ENCODE measurements at regions of chr2 and their contacts with region 1.

Region 1: GRCh38 chr2:141513853-141514252 is 617.0 kb downstream of the LRP1B start:
- DNase-seq: no peak

Region 2: GRCh38 chr2:141029424-141030078 is 484.3 kb before region 1 on chr2:
- intact Hi-C with region 1: loop called in 1 of 2 experiments (anchors 10 kb)
- DNase-seq: no peak

Region 3: DNA sequence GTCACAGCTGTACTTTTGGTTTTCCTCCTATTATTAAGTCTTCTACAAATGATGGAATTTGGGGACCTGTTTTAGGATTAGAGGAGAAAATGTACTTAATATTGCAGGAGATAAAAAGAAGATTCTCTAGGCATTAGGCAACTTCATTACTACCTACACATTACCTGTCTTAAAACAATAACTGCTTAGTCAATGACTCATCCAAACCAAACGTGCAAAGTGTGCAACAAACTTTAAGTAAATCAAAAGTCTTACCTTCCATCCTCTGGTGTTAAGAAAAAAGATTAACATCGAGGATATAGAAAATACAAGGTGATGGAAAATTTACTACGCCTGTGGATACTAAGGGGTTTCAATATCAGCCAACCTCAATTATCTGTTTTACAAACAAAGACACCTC is 1078.3 kb after region 1 on chr2:
- intact Hi-C with region 1: loop called in 1 of 2 experiments (anchors 5 kb)
- DNase-seq: no peak